ENCODE measurements at regions of chr18 and their contacts with region 1.

Region 1: GRCh38 chr18:66916834-66917233 is 312.9 kb upstream of the CDH19 start:
- DNase-seq: no peak
- ATAC-seq: no peak
- H3K4me3 ChIP-seq: no peak overlapping the region
- H3K27ac ChIP-seq: no peak overlapping the region
- H3K4me1 ChIP-seq: no peaks in the 10 kb centered on the region
- H3K27me3 ChIP-seq: no peaks in the 10 kb centered on the region

Region 2: DNA sequence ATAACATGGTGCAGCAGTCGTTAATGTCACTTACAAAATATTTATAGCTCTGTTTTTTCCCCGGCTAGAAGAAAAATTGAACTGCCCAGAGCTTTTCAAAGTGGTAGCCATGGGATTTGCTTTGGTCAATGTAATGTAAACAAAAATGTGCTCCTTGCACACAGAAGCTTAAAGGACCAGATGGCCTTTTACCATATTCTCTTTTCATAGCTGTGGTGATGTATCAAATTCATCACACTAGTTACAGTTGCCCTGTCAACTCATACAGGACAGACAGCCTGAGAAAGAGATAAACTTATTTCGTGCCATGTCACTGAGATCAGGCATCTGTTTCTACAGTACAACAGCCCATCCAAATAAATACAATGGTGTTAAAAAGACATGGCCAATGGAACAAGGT is 55.1 kb after region 1 on chr18:
- intact Hi-C with region 1: loop called in 1 of 2 experiments (anchors 10 kb)
- DNase-seq: no peak
- ATAC-seq: no peak
- H3K4me3 ChIP-seq: no peak overlapping the region
- H3K27ac ChIP-seq: no peak overlapping the region
- H3K4me1 ChIP-seq: no peaks in the 10 kb centered on the region
- H3K27me3 ChIP-seq: no peaks in the 10 kb centered on the region

Region 3: GRCh38 chr18:67072791-67073190 is 156.0 kb after region 1 on chr18:
- intact Hi-C with region 1: no loop called
- DNase-seq: no peak
- ATAC-seq: no peak
- H3K4me3 ChIP-seq: no peak overlapping the region
- H3K27ac ChIP-seq: no peak overlapping the region
- H3K4me1 ChIP-seq: no peaks in the 10 kb centered on the region
- H3K27me3 ChIP-seq: no peaks in the 10 kb centered on the region